Right ventricle myocardium inferior (tissue), 1 donor: ENCODE measurements at regions of chr11 and their contacts with region 1.

Region 1: DNA sequence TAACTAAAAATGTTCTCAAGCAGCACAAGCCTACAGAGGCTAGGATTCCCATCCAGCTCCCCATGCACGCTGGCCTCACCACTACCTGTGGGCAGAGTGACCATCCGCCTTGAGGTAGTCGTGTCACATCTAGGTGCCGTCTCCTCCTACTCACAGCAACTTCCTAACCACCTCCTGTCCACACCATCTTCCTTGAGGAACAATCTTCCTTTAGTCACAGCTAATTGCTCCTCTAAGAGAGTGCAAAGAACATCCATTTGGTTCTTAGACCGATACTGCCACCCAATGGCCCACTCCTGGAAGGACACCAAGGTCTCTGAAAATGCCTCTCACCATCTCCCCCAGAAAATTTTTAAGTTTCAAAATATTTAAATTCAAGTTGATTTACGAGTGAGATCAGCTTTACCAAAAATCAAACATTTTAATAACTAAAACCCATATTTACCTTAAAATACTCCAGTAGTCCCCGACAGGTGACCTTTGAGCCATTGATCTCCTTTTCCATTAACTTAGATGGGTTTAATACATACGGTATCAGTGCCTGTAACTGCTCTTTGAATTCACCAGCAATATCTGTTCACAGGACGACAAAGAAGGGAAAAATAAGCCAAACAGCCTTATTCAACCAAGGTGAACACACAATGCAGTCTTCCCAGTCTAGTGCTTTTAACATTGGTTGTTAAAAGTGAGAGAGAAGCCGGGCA is 21.7 kb upstream of the PLAAT3 start:
- DNase-seq: no peak
- ATAC-seq: peak; percentile 46

Region 2: DNA sequence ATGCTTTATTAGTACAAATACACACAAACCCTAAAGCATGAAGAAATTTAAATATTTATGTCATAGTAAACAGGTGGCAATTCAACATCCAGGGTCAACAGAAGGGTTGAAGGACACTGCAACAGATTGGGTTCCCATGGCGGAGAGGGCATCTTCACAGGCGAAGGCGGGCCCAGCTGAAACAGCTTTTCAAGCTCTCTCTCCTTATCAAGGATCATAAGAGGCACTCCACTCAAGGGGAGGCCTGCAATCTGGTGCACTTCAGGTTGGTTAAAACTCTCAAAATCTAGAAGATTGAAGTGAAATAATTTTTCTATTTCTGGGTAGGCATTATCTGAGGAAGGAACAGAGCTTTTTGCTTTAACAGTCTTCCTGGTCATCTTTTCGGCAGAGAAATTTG is 603.5 kb before region 1 on chr11:
- intact Hi-C with region 1: loop called (anchors 10 kb)
- DNase-seq: no peak
- ATAC-seq: no peak

Region 3: DNA sequence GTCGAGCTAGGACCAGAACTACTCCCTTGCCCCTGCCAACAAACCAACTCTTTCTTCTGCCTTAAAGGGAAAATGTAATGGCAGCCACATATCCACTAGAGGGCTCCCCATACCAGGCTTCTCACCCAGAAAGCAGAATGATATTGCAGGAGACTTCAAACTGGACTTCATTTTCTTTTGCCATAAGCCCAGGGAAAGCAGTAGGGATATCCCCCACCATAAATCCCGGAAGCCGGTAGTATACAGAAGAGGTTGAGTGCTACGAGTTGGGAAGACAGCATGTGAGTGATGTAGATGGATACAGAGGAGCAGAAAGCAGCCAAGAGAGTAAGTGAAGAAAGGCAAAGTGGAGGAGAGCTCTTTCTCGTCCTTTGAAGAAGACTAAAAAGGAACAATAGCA is 157.0 kb before region 1 on chr11:
- intact Hi-C with region 1: loop called (anchors 1 kb)
- DNase-seq: no peak
- ATAC-seq: peak; percentile 79

Region 4: DNA sequence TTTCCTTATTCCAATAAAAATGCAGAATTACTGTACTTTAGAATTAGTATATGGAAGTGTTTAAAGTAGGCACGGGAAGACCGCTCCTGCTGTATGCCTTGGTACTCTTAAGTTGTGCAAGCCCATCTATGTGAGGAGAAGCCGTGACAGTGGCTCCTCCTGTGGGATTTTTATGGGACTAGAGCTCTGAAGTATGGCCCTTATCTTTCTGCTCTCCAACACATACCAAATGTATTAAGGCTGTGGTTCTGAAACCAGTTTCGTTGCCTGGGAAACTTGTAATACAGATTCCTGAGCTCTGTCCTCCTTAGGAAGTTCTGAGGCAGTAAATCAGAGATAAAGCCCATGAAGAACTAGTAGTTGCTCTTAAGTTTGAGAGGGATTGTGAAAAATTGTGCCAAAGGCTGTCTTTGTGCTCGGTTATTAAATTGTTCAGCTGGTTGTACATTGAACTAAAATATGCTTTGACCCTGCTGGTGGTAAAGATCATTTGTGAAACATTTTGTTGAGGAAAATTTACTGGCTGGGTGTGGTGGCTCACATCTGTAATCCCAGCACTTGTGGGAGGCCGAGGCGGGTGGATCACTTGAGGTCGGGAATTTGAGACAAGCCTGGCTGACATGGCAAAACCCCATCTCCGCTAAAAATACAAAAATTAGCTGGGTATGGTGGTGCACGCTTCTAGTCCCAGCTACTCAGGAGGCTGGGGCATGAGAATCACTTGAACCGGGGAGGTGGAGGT is 74.7 kb after region 1 on chr11:
- intact Hi-C with region 1: no loop called
- DNase-seq: no peak
- ATAC-seq: peak; percentile 77

Region 5: GRCh38 chr11:63738720-63739360 is 102.9 kb after region 1 on chr11:
- intact Hi-C with region 1: loop called (anchors 5 kb)
- DNase-seq: no peak
- ATAC-seq: no peak